Esophagus squamous epithelium (tissue), 5 donors: ENCODE measurements at regions of chr7 and their contacts with region 1.

Region 1: GRCh38 chr7:5083311-5083711 is 37.7 kb downstream of the RBAK start:
- DNase-seq: no peak
- H3K4me3 ChIP-seq: no peak overlapping the region
- H3K27ac ChIP-seq: no peak overlapping the region
- H3K4me1 ChIP-seq: peaks cover 0 to 6% (median 0%) of the 10 kb centered on the region in 3 donors
- H3K27me3 ChIP-seq: peaks cover 0 to 56% (median 0%) of the 10 kb centered on the region in 4 donors
- CTCF ChIP-seq: no peak
- POLR2A ChIP-seq: no peak

Region 2: GRCh38 chr7:4797858-4798705 is 285.2 kb before region 1 on chr7:
- intact Hi-C with region 1: loop called (anchors 10 kb)
- DNase-seq: no peak
- H3K4me3 ChIP-seq: no peak overlapping the region
- H3K27ac ChIP-seq: no peak overlapping the region
- H3K4me1 ChIP-seq: peaks cover 0 to 16% (median 2%) of the 10 kb centered on the region in 3 donors
- H3K27me3 ChIP-seq: no peaks in the 10 kb centered on the region
- CTCF ChIP-seq: peak; percentile 51 to 87 (median 66)
- POLR2A ChIP-seq: no peak

Region 3: DNA sequence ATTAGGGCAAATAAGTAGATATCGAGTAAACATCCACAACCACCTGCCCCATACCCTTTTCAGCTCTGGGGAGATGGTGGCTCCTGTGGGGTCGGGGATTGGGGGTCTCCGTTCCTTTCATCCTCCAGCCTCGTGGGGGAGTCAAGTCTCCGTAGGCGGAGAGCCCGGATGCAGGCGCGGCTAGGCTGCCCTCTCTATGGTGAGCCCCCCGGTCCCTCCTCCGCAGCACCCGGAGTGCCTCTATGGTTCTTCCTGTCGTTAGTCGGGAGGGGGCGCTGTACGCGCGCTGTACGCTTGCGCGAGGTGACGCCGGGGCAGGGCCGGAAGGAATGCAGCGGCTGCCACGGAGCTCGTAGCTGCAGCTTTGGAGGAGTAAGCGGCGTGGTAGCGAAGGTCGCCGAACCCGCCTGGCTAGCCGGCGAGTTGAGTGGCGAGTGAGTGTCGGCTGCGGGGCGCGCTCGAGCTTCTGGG is 109.5 kb before region 1 on chr7:
- intact Hi-C with region 1: loop called (anchors 5 kb)
- DNase-seq: peak; percentile 32
- H3K4me3 ChIP-seq: peak overlapping the region; percentile 63 to 94 (median 77)
- H3K27ac ChIP-seq: peak overlapping the region; percentile 86 to 98 (median 90)
- H3K4me1 ChIP-seq: peaks cover 0 to 31% (median 3%) of the 10 kb centered on the region in 3 donors
- H3K27me3 ChIP-seq: no peaks in the 10 kb centered on the region
- CTCF ChIP-seq: peak; percentile 54 to 92 (median 81)
- POLR2A ChIP-seq: peak in 2 of 4 donors; percentile 40 to 59